HCT116 (cell line): ENCODE measurements at regions of chr10 and their contacts with region 1.

Region 1: GRCh38 chr10:79374312-79375191 is 27.3 kb downstream of the PPIF start:
- DNase-seq: peak; percentile 40
- ATAC-seq: peak; percentile 87
- H3K4me3 ChIP-seq: no peak overlapping the region
- H3K27ac ChIP-seq: no peak overlapping the region
- H3K4me1 ChIP-seq: peaks cover 3 to 10% of the 10 kb centered on the region in 2 experiments; a peak in 2 of 4 replicates
- H3K27me3 ChIP-seq: no peaks in the 10 kb centered on the region
- CTCF ChIP-seq: peak; percentile 89 to 92 (median 89)
- POLR2A ChIP-seq: no peak
- RAD21 ChIP-seq: peak; percentile 98

Region 2: GRCh38 chr10:79463578-79464496 is 89.3 kb after region 1 on chr10:
- CTCF ChIA-PET with region 1: interaction called, 4 read pairs
- POLR2A ChIA-PET with region 1: no interaction called
- RAD21 ChIA-PET with region 1: no interaction called
- intact Hi-C with region 1: loop called (anchors 1 kb)
- DNase-seq: no peak
- ATAC-seq: no peak
- H3K4me3 ChIP-seq: no peak overlapping the region
- H3K27ac ChIP-seq: no peak overlapping the region
- H3K4me1 ChIP-seq: no peaks in the 10 kb centered on the region
- H3K27me3 ChIP-seq: peaks cover 6% of the 10 kb centered on the region; the same call in 1 of the 2 replicates
- CTCF ChIP-seq: no peak
- POLR2A ChIP-seq: no peak
- RAD21 ChIP-seq: no peak

Region 3: DNA sequence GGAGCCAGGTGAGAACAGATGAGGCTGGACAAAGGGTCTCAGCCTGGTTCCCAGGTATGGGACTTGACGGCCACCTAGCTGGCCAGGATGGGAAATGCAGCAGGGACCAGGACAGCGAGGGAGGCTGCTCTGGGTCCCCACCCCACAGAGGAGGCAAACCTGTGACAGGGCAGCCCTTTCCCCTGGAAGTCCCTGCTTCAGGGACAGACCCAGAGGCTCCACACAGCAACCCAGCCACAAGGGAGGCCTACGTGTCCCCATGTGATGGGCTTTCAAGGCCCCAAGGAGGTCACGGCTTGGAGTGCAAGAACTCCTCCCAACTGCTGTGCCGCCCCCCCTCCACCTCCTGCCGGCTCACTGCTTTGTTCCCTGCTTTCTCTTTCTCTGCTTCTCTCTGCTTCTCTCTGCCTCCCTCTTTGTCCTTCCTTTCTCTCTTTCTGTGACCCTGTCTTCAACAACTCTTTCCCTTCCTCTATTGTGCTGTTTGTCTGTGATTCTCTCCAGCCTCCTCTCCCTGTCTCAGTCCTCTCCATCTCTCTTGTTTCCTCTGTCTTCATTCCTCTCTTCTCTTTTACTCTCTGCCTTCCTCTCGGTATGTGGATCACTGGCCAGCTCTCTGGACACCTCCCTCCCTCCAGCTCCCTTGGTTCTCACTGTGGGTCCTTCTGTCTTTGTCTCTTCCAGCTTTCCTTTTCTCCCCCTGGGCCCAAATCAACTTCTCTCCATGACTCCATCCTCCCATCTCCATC is 128.2 kb after region 1 on chr10:
- CTCF ChIA-PET with region 1: interaction called, 21 read pairs
- POLR2A ChIA-PET with region 1: no interaction called
- RAD21 ChIA-PET with region 1: interaction called in 1 of 2 experiments, 3 read pairs
- intact Hi-C with region 1: loop called (anchors 1 kb)
- DNase-seq: no peak
- ATAC-seq: peak; percentile 99
- H3K4me3 ChIP-seq: no peak overlapping the region
- H3K27ac ChIP-seq: no peak overlapping the region
- H3K4me1 ChIP-seq: no peaks in the 10 kb centered on the region; a peak in 1 of 4 replicates
- H3K27me3 ChIP-seq: peaks cover 37% of the 10 kb centered on the region; the same call in 1 of the 2 replicates
- CTCF ChIP-seq: peak; percentile 56 to 76 (median 62)
- POLR2A ChIP-seq: no peak
- RAD21 ChIP-seq: peak; percentile 79